ENCODE measurements at regions of chr1 and their contacts with region 1.

Region 1: GRCh38 chr1:202998836-202999750 is 8.1 kb upstream of the TMEM183A start:
- DNase-seq: peak; percentile 82
- ATAC-seq: peak; percentile 45
- H3K4me3 ChIP-seq: peak overlapping the region in 3 of 5 experiments; percentile 32 to 40 (median 37)
- H3K4me3 Mint-ChIP-seq: peak overlapping the region; percentile 72
- H3K27ac ChIP-seq: peak overlapping the region; percentile 57 to 64
- H3K27ac Mint-ChIP-seq: peak overlapping the region; percentile 83
- H3K4me1 ChIP-seq: peaks cover 14 to 15% of the 10 kb centered on the region in 2 donors
- H3K4me1 Mint-ChIP-seq: peaks cover 16% of the 10 kb centered on the region
- H3K27me3 ChIP-seq: no peaks in the 10 kb centered on the region
- H3K27me3 Mint-ChIP-seq: peaks cover 4% of the 10 kb centered on the region
- CTCF ChIP-seq: peak; percentile 93

Region 2: DNA sequence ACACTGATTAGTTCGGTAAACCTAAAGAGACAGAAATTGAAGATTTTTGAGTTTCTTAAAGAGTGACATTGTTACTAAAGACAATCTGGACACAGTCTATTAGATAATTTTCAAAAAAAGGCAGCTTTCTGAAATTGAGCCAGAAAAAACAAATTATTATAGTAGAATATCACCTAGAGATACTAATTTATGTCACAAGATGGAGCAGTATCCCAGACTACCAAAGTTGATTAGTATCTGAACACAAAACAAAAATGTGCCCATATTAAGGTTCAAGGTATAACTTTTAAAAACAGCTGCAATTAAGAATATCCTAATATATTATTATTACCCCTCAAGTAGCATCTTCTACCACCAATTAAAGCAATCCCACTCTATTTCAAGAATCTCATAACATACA is 248.3 kb before region 1 on chr1:
- CTCF ChIA-PET with region 1: interaction called, 48 read pairs
- POLR2A ChIA-PET with region 1: no interaction called
- intact Hi-C with region 1: loop called (anchors 1 kb)
- DNase-seq: peak; percentile 12
- ATAC-seq: no peak
- H3K4me3 ChIP-seq: no peak overlapping the region
- H3K4me3 Mint-ChIP-seq: no peak overlapping the region
- H3K27ac ChIP-seq: no peak overlapping the region
- H3K27ac Mint-ChIP-seq: no peak overlapping the region
- H3K4me1 ChIP-seq: no peaks in the 10 kb centered on the region
- H3K4me1 Mint-ChIP-seq: no peaks in the 10 kb centered on the region
- H3K27me3 ChIP-seq: no peaks in the 10 kb centered on the region
- H3K27me3 Mint-ChIP-seq: no peaks in the 10 kb centered on the region
- CTCF ChIP-seq: peak; percentile 42

Region 3: DNA sequence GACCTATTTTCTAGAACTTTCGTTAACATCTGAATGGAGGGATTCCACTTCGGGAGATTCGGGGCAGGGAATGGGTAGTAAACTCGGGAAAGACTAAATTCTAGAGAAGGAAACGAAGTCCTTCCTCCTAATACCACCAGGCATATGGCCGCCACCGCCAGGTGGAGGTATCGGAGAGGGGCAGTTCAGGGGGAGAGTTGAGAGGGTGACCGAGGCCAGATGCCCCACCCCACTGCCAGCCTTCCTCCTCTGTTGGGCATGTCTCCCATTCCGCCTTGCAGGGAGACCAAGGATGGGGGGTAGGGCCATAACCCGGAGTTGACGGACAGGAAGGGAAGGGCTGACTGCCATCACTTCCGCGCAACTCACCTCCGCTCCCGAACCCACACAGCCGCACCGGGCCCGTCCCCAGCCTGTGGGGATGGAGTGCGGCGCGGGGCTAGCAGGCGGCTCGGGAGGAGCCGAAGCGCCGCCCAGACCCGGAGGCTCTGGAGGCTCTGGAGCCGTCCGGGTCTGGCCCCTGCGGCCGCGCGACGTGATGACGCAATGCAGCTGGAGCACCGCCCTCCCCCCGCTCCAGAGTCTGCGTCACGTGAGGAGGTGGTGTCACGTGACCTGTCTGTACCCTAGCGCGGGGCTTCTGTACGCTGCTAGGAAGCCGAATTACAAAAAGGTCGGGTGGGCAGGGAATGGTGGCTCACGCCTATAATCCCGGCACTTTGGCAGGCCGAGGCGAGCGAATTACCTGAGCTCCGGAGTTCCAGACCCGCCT is 72.2 kb before region 1 on chr1 and contains the start of gene KLHL12:
- CTCF ChIA-PET with region 1: interaction called, 8 read pairs
- POLR2A ChIA-PET with region 1: no interaction called
- intact Hi-C with region 1: loop called (anchors 1 kb)
- DNase-seq: peak; percentile 97
- ATAC-seq: peak; percentile 94
- H3K4me3 ChIP-seq: peak within 1 kb of the TSS; percentile 92 to 99 (median 94)
- H3K4me3 Mint-ChIP-seq: peak within 1 kb of the TSS; percentile 94
- H3K27ac ChIP-seq: peak within 1 kb of the TSS; percentile 89 to 95
- H3K27ac Mint-ChIP-seq: peak within 1 kb of the TSS; percentile 97
- H3K4me1 ChIP-seq: peaks cover 9 to 14% of the 10 kb centered on the region in 2 donors
- H3K4me1 Mint-ChIP-seq: peaks cover 21% of the 10 kb centered on the region
- H3K27me3 ChIP-seq: no peaks in the 10 kb centered on the region
- H3K27me3 Mint-ChIP-seq: no peaks in the 10 kb centered on the region
- CTCF ChIP-seq: peak; percentile 81
- total RNA-seq, gene KLHL12: 25.5 and 26.1 TPM in 2 replicates

Region 4: DNA sequence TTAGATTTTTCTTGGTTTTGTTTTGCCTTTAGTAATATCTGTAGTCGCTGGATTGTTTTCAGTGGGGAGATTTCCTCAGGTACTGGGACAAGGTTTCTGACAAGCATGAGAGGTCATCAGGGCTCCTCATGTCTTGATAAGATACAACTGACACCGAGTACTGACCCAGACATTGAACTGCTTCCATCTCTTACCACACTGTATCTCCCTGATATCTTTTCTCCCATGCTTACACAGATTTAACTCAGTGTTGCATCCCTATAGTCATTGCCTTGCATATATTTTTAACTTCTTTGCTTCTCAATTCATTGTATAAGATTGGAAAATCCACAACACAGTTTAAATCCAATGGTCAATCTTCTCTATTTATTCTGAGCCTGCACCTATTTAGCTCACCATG is 19.6 kb before region 1 on chr1:
- CTCF ChIA-PET with region 1: interaction called, 10 read pairs
- POLR2A ChIA-PET with region 1: no interaction called
- intact Hi-C with region 1: no loop called
- DNase-seq: no peak
- ATAC-seq: no peak
- H3K4me3 ChIP-seq: no peak overlapping the region
- H3K4me3 Mint-ChIP-seq: no peak overlapping the region
- H3K27ac ChIP-seq: no peak overlapping the region
- H3K27ac Mint-ChIP-seq: no peak overlapping the region
- H3K4me1 ChIP-seq: no peaks in the 10 kb centered on the region
- H3K4me1 Mint-ChIP-seq: peaks cover 6% of the 10 kb centered on the region
- H3K27me3 ChIP-seq: peaks cover 0 to 2% (median 0%) of the 10 kb centered on the region in 4 experiments
- H3K27me3 Mint-ChIP-seq: peaks cover 26% of the 10 kb centered on the region
- CTCF ChIP-seq: no peak

Region 5: GRCh38 chr1:202987922-202988583 is 11.0 kb before region 1 on chr1:
- CTCF ChIA-PET with region 1: interaction called, 25 read pairs
- POLR2A ChIA-PET with region 1: no interaction called
- intact Hi-C with region 1: no loop called
- DNase-seq: no peak
- ATAC-seq: no peak
- H3K4me3 ChIP-seq: no peak overlapping the region
- H3K4me3 Mint-ChIP-seq: no peak overlapping the region
- H3K27ac ChIP-seq: no peak overlapping the region
- H3K27ac Mint-ChIP-seq: no peak overlapping the region
- H3K4me1 ChIP-seq: peaks cover 23 to 27% of the 10 kb centered on the region in 2 donors
- H3K4me1 Mint-ChIP-seq: peaks cover 41% of the 10 kb centered on the region
- H3K27me3 ChIP-seq: no peaks in the 10 kb centered on the region
- H3K27me3 Mint-ChIP-seq: no peaks in the 10 kb centered on the region
- CTCF ChIP-seq: no peak